Cardiac septum (tissue), 1 donor: ENCODE measurements at regions of chr16 and their contacts with region 1.

Region 1: DNA sequence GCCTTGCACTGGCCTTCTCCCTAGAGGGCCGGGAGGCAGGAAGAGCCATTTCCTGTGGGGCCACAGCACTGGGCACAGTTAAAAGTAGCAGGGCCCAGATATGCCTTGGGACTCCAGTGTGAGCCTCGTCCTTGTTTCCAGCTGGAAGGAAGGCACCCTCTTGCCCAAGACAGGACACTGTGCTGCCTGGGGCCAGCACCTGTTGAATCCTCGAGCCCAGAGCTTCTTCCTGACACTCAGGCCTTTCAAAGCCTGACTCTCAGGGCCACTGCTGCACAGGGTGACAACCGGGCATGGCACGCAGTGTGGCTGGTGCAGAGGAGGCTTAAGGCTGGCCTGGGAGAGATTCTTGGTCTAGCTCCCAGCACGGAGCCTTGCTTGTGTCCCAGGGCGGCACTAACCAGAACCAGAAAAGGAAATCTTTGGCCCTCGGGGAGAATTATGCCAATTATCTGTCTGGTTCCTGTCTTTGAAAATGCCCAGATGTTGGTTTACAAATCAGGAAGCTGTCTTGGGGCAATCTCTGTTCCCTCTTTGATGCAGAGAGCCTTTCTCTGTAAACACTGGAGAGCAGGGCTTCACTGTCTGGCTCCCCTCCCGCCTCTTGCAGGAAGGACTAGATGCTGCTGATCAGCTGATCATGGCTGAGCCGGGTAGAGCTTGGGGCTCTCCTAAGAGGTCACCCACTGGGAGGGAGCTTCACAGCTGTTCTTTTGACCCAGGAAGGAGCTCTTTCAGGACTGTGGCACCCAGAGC is 11.1 kb downstream of the LDHD start:
- DNase-seq: peak; percentile 87

Region 2: GRCh38 chr16:75089486-75090202 is 15.8 kb before region 1 on chr16:
- intact Hi-C with region 1: loop called (anchors 2 kb)
- DNase-seq: no peak

Region 3: GRCh38 chr16:75432828-75433731 is 327.6 kb after region 1 on chr16 and contains the start of gene CFDP1:
- intact Hi-C with region 1: no loop called
- DNase-seq: peak; percentile 99
- total RNA-seq, gene CFDP1: 24.6 TPM